Right ventricle myocardium inferior (tissue), 1 donor: ENCODE measurements at regions of chr10 and their contacts with region 1.

Region 1: DNA sequence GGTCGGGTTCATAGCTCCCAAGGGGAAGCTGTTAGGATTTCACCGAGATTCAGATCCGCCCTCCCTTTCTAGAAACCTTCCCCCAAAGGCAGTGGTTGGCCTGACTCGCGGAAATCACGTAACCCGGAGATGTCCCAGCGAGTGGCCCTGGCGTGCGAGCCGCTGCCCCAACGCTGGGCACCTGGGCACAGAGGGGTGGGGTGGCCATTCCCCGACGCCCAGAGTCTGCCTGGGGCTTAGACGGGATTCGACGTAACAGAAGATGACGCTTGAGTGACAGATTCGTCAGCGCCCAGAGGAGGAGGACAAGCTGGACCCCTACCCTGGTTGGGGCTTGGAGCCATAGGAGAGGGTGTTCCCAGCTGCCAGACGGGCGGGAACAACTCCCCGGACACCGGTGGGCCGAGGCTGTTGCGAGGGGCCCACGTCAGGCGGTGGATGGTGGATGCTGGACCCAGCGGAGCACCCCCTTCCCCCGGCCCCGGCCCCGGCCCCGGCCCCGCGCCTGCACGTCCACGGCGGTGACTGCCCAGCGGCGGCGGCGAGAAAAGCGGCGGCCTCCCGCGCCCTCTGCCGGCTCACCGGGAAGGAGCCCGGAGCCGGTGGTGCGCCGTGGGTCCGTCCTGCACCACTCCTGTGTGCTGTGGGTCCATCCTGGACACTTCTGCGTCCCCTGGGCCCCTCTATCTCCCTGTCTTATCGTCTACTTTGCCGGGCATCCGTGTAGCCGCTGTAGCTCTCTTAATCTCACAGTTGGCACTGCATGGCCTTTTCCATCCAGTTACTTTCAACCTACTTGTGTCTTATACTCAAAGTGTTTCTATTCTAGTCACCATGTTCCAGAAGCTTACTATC is 35.4 kb upstream of the KNDC1 start:
- DNase-seq: peak; percentile 57
- ATAC-seq: peak; percentile 64

Region 2: DNA sequence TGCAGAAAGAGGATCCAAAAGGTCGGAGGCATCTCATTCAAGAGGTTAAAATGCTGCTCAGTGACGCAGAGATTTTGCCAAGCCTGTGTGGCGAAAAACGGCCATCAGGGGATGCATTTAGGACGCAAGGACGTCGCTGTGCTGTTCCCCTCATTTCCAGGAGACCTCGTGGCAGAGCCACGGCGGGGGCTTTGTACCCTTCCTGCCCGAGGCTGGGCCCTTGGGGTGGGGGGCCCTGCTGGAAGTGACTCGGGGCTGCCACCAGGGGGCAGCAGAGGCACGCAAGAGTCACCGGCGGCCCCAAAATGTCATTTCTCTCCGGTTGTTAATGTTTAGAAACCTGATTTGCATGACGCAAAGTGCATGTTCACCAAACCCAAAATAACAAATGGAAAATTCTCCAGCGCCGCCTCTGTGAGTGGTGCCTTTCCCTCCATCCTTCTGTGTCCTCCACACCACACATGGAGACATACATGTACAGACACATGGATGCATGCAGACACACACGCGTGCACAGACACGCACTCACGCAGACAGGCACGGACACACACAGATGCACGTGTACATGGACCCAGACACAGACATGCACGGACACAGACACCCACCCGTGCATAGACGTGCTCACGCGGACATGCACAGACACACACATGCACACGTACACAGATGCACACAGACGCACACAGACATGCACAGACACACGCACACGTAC is 287.6 kb before region 1 on chr10:
- intact Hi-C with region 1: loop called (anchors 2 kb)
- DNase-seq: peak; percentile 68
- ATAC-seq: no peak

Region 3: GRCh38 chr10:132904181-132904819 is 220.3 kb before region 1 on chr10:
- intact Hi-C with region 1: loop called (anchors 10 kb)
- DNase-seq: peak; percentile 74
- ATAC-seq: no peak

Region 4: GRCh38 chr10:133210398-133211140 is 86.0 kb after region 1 on chr10:
- intact Hi-C with region 1: no loop called
- DNase-seq: peak; percentile 30
- ATAC-seq: no peak